Ovary (tissue), 10 donors: ENCODE measurements at regions of chr12 and their contacts with region 1.

Region 1: GRCh38 chr12:65511912-65512311 is 233.4 kb downstream of the MSRB3 start:
- DNase-seq: no peak
- H3K4me3 ChIP-seq: no peak overlapping the region
- H3K27ac ChIP-seq: no peak overlapping the region
- H3K4me1 ChIP-seq: no peaks in the 10 kb centered on the region
- H3K27me3 ChIP-seq: no peaks in the 10 kb centered on the region
- CTCF ChIP-seq: no peak
- EP300 ChIP-seq: no peak
- POLR2A ChIP-seq: no peak

Region 2: DNA sequence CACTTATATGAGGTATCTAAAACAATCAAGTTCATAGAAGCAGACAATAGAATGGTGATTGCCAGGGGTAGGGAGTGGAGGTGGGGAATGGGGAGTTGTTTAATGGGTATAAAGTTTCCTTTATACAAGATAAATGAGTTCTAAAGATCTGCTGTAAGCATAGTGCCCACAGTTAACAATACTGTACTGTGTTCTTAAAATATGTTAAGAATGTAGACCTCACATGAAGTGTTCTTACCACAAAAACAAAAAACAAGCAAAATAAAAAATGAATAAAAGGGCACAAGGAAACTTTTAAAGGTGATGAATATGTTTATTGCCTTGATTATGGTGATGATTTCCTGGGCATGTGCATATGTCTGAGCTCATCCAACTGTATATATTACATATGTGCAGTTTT is 21.7 kb before region 1 on chr12:
- intact Hi-C with region 1: loop called in 1 of 4 experiments (anchors 2 kb)
- DNase-seq: no peak
- H3K4me3 ChIP-seq: no peak overlapping the region
- H3K27ac ChIP-seq: no peak overlapping the region
- H3K4me1 ChIP-seq: no peaks in the 10 kb centered on the region
- H3K27me3 ChIP-seq: no peaks in the 10 kb centered on the region
- CTCF ChIP-seq: no peak
- EP300 ChIP-seq: no peak
- POLR2A ChIP-seq: no peak